Activated CD4-positive, alpha-beta memory T cell treated with anti-CD3 and anti-CD28 coated beads for 36 hours (primary cell): ENCODE measurements at regions of chr1 and their contacts with region 1.

Region 1: DNA sequence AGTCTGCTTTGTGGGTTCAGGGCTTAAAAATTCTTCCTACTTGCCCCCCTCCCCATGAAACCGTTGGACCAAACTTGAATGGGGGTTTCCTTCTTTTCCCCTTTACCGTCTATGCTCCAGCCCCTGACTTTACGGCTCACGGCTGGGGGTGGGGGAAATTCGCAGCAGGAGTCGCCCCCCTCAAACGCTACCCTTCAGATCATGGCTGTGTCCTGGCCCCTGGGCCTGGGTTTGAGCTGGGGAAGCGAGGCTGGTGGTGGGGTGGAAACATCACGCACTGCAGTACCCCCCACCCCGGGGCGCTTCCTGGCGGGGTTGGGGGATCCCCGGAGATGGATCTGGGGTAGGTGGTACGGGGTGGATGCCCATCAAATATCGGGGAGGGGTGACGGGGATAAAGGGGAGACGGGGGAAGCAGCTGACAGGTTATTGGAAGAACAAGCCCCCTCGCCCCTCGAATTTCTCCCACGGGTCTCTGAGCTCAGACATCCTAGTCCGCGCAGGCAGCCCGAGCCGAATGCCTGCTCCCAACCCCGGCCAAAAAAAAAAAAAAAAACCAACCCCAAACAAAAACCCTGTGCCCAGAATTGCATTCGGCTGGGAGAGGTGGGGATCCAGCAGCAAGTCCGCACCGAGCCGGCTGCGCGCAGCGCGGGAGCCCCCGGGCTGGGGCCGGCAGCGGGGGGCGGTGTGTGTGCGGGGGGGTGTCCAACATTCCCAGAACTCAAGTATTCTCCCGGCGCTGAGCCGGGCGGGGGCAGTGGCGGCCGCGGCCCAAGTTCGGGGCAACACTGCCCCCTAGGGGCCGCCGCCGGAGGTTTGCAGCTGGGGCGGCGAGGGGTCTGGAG is 59.0 kb upstream of the ACOT11 start:
- DNase-seq: peak; percentile 76
- H3K4me3 Mint-ChIP-seq: peak overlapping the region; percentile 81
- H3K27ac Mint-ChIP-seq: peak overlapping the region; percentile 47
- H3K4me1 Mint-ChIP-seq: peaks cover 27% of the 10 kb centered on the region
- H3K27me3 Mint-ChIP-seq: peaks cover 6% of the 10 kb centered on the region

Region 2: DNA sequence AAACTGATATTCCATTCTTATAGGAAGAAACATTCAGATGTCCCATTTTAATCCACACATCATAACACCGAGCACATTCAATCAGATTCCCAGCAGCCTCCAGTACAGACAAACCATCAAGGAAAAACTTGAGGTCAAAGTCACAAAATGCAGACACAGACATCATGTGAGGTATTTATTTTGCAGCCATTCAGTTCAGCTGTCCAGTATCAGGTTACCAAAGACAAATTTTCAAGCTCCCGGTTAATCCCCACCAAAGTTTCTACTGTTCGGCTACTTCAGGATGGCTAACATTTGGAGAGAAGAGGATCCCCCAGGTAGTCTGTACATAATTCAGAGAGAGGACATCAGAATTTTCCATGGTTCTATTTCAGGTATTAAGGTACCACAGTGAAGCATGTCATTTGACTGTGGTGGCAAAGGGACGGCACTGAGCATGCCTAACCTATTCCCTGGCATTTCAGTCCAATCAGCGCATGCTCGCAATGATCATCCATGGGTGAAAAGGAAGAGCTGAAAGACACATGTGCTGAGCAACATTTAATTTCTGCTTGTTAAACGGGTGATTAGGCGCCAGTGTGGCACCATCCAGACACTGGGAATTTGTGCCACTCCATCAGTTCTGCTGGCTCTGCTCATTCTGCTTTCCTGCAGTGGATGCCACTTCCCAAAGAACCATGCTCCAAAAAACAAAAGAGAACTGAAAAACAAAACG is 637.3 kb before region 1 on chr1:
- CTCF ChIA-PET with region 1: no interaction called
- POLR2A ChIA-PET with region 1: no interaction called
- intact Hi-C with region 1: no loop called
- DNase-seq: no peak
- H3K4me3 Mint-ChIP-seq: no peak overlapping the region
- H3K27ac Mint-ChIP-seq: no peak overlapping the region
- H3K4me1 Mint-ChIP-seq: no peaks in the 10 kb centered on the region
- H3K27me3 Mint-ChIP-seq: no peaks in the 10 kb centered on the region

Region 3: DNA sequence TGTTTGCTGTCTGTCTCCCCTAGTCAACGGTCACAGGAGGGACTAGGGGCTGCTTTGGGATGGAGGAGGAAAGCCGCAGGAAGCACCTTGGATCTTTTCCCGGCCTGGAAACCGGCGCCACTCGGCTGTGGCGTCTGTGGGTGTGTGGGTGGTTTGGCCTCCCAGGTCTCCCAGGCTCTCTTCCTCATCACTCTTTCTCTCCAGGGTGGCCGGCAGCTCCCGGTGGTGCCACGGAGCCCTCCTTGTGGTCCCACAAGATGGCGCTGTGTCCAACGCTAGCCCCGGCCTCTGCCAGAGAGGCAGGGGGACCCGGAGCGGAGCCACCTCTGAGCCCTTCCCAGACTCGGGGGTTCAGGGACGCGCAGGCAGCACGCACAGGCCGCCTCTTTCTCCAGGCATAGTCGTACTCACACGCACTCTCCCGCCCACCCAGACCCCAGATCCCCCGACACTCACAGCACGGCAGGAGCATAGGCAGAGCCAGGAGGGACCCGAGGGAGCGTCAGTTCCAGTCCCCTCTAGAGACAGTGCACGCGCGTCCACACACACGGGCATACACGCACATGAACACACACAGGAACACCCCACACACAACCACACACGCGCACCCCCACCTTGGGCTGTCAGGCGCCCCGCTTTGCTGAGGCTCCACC is 367.4 kb before region 1 on chr1:
- CTCF ChIA-PET with region 1: interaction called, 7 read pairs
- POLR2A ChIA-PET with region 1: no interaction called
- intact Hi-C with region 1: loop called (anchors 1 kb)
- DNase-seq: peak; percentile 78
- H3K4me3 Mint-ChIP-seq: no peak overlapping the region
- H3K27ac Mint-ChIP-seq: no peak overlapping the region
- H3K4me1 Mint-ChIP-seq: peaks cover 5% of the 10 kb centered on the region
- H3K27me3 Mint-ChIP-seq: peaks cover 2% of the 10 kb centered on the region

Region 4: DNA sequence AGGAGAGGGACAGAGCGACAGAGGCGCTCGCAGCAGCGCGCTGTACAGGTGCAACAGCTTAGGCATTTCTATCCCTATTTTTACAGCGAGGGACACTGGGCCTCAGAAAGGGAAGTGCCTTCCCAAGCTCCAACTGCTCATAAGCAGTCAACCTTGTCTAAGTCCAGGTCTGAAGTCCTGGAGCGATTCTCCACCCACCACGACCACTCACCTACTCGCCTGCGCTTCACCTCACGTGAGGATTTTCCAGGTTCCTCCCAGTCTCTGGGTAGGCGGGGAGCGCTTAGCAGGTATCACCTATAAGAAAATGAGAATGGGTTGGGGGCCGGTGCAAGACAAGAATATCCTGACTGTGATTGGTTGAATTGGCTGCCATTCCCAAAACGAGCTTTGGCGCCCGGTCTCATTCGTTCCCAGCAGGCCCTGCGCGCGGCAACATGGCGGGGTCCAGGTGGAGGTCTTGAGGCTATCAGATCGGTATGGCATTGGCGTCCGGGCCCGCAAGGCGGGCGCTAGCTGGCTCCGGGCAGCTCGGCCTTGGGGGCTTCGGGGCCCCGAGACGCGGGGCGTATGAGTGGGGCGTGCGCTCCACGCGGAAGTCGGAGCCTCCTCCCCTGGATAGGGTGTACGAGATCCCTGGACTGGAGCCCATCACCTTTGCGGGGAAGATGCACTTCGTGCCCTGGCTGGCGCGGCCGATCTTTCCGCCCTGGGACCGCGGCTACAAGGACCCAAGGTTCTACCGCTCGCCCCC is 289.1 kb before region 1 on chr1 and contains the starts of genes CYB5RL and MRPL37:
- CTCF ChIA-PET with region 1: interaction called, 16 read pairs
- POLR2A ChIA-PET with region 1: no interaction called
- intact Hi-C with region 1: loop called (anchors 1 kb)
- DNase-seq: peak; percentile 94
- H3K4me3 Mint-ChIP-seq: peak within 1 kb of the TSS; percentile 90
- H3K27ac Mint-ChIP-seq: peak within 1 kb of the TSS; percentile 75
- H3K4me1 Mint-ChIP-seq: peaks cover 29% of the 10 kb centered on the region
- H3K27me3 Mint-ChIP-seq: no peaks in the 10 kb centered on the region
- total RNA-seq, gene CYB5RL: 12.8 to 13.0 TPM
- total RNA-seq, gene MRPL37: 157 to 166 TPM

Region 5: DNA sequence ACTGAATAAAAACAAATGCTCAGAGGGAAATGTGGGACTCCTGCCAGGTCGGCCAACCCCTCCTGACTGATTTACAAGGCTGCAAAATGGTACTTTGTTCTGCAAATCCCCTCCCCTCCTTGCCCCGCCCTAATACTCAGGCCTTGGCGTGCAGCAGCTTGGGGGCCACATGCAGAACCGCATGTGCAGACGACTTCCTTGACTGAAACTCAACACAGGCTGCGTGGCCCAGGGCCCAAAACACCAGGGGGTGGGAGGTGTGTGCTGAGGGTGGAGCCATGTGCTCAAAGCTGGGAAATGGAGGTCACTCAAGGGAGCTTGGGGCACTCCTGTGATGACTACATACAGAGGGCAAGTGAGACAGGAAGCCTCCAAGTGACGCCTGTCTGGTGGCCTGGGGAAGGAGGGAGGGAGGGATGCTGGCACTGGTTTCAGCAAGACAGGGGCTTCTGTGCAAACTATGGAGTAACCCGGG is 201.8 kb before region 1 on chr1:
- CTCF ChIA-PET with region 1: interaction called, 3 read pairs
- POLR2A ChIA-PET with region 1: no interaction called
- intact Hi-C with region 1: loop called (anchors 10 kb)
- DNase-seq: peak; percentile 87
- H3K4me3 Mint-ChIP-seq: peak overlapping the region; percentile 3
- H3K27ac Mint-ChIP-seq: peak overlapping the region; percentile 85
- H3K4me1 Mint-ChIP-seq: peaks cover 81% of the 10 kb centered on the region
- H3K27me3 Mint-ChIP-seq: no peaks in the 10 kb centered on the region

Region 6: DNA sequence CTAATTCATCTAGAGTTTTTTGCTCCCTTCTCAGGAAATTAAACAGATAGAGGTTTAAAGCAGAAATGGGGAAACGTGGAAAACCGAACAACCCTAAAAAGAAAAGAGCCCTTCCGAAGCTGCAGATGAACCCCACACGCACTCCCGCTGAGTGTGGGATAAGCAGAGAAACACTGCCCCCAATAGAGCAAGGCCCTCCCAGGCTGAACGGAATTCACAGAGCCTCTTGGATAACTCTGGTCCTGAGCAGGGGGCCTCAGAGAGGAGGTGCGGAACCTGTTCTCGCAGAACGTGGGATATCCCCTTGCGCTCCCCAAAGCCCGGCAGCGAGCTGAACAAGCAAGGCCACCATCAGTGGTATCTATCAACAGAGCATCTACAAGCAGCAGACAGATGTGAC is 127.7 kb before region 1 on chr1:
- CTCF ChIA-PET with region 1: interaction called, 6 read pairs
- POLR2A ChIA-PET with region 1: no interaction called
- intact Hi-C with region 1: loop called (anchors 2 kb)
- DNase-seq: no peak
- H3K4me3 Mint-ChIP-seq: no peak overlapping the region
- H3K27ac Mint-ChIP-seq: no peak overlapping the region
- H3K4me1 Mint-ChIP-seq: peaks cover 62% of the 10 kb centered on the region
- H3K27me3 Mint-ChIP-seq: no peaks in the 10 kb centered on the region

Region 7: DNA sequence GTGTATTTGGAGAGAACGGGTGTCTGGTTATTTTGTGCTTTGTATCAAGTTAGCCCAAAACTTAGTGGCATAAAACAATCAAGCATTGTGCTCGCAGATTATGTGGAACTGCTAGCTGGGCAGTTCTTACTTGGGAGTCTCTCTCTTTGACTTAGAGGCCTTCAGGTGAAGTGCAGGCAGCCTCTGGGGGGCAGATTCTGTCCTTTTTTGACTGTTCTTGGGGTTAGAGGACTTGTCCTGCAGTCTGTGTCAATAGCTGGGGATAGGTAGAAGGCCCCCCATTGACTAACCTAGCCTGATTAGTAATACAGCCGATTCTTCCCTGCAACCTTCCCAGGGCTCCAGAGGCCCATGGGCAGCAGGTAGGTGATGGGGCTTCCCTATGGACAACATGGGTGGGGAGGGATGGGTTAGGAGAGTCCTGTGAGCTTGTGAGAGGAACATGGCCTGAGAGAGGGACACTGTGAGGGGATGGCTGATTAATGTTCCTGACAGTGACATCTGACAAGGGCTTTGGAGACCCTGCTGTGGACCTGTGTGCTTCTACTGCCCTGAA is 21.8 kb after region 1 on chr1:
- CTCF ChIA-PET with region 1: no interaction called
- POLR2A ChIA-PET with region 1: no interaction called
- intact Hi-C with region 1: no loop called
- DNase-seq: no peak
- H3K4me3 Mint-ChIP-seq: no peak overlapping the region
- H3K27ac Mint-ChIP-seq: no peak overlapping the region
- H3K4me1 Mint-ChIP-seq: no peaks in the 10 kb centered on the region
- H3K27me3 Mint-ChIP-seq: peaks cover 1% of the 10 kb centered on the region

Region 8: DNA sequence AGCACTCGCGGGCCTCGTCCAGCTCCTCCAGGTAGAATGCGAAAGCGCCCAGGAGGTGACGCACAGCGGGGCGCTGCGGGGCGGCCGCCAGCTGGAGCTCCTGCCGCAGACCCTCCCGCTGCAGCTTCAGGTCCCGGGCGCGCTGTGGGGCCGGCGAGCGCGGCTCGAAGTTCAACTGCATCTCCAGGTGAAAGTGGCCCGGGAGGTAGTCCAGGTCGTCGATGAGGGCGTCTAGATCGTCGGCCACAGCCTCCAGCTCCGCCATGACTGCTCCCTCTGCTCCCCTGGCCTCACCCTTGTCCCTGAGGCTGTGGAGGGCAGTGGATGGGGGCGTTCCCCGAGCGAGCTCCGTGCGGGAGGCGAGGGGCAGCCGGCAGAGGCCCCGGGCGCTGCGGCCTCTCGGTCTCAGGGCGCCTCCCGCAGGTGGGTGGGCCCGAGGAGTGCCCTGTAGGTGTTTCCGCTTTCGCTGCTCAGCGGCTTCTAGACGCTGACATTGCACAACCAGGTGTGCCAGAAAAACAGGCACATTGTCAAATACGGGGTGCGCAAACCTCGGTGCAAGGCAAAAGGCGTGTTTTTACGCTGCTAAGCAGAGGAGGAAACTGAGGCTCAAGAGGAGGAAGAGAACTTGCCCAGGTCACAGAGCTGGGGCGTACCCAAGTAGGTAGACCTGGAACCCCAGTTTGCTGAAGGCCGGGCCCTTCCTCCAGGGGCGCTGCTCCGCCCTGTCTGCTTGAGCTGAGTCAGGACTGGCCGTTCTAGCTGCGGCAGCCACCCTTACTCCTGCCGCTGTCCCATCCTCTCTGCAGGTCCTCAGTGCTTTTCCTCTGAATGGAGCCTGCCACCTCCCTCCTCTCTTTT is 312.1 kb after region 1 on chr1 and contains the start of gene TTC22:
- CTCF ChIA-PET with region 1: interaction called, 3 read pairs
- POLR2A ChIA-PET with region 1: no interaction called
- intact Hi-C with region 1: loop called (anchors 5 kb)
- DNase-seq: peak; percentile 86
- H3K4me3 Mint-ChIP-seq: peak within 1 kb of the TSS; percentile 84
- H3K27ac Mint-ChIP-seq: peak within 1 kb of the TSS; percentile 67
- H3K4me1 Mint-ChIP-seq: peaks cover 56% of the 10 kb centered on the region
- H3K27me3 Mint-ChIP-seq: no peaks in the 10 kb centered on the region
- total RNA-seq, gene TTC22: 4.6 to 5.3 TPM